HCT116 (cell line): ENCODE measurements at regions of chr15 and their contacts with region 1.

Region 1: DNA sequence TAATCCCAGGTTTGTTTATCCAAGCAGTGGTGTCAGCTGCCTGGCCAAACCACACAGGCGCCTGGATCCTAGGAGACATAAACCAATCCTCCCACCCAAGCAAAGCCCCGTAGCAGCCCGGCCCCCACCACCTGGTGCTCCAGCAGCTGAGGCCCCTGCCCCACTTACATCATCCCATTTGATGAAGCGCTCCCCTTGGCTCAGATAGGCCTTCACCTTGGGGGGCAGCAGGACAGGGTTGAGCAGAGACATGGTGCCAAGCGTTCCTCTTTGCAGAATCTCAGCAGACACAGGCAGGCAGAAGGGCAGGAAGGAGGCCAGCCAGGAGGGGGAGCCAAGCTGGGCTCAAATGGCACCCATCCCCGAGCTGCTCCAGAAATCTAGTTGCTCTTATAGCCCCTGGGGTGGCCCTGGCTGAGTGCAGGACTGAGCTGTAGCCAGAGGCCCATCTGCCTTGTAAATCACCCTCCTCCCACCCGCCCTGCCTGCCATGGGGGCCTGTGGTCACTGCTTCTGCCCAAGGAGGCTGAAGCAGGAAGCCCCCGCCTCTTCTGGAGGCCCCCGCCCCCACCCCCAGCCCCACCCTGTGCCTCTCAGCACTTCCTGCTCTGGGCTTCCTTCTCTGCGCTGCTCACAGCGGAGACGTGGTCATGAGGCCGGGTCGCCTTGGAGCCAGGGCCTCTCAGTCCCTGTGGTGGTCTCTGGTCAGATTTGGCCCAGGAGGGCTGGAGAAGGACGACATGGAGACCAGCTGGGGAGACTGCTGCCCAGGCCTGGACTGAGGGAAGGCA is at the start of gene PLCB2:
- DNase-seq: no peak
- ATAC-seq: peak; percentile 52
- H3K4me3 ChIP-seq: no peak within 1 kb of the TSS
- H3K27ac ChIP-seq: no peak within 1 kb of the TSS
- H3K4me1 ChIP-seq: peaks cover 2 to 14% of the 10 kb centered on the region in 2 experiments; a peak in 1 of 4 replicates
- H3K27me3 ChIP-seq: 0 out of 2 replicates have a peak, but pooled peaks cover 6% of the 10 kb centered on the region
- CTCF ChIP-seq: peak in 2 of 3 experiments; percentile 30 to 44; a peak in 3 of 6 replicates
- POLR2A ChIP-seq: no peak
- RAD21 ChIP-seq: no peak
- total RNA-seq, gene PLCB2: 2.8 TPM

Region 2: GRCh38 chr15:40002295-40002694 is 305.3 kb before region 1 on chr15:
- CTCF ChIA-PET with region 1: no interaction called
- POLR2A ChIA-PET with region 1: no interaction called
- RAD21 ChIA-PET with region 1: no interaction called
- intact Hi-C with region 1: no loop called
- DNase-seq: no peak
- ATAC-seq: no peak
- H3K4me3 ChIP-seq: no peak overlapping the region
- H3K27ac ChIP-seq: no peak overlapping the region
- H3K4me1 ChIP-seq: peaks cover 3% of the 10 kb centered on the region in 2 experiments; a peak in 2 of 4 replicates
- H3K27me3 ChIP-seq: no peaks in the 10 kb centered on the region
- CTCF ChIP-seq: no peak
- POLR2A ChIP-seq: no peak
- RAD21 ChIP-seq: no peak

Region 3: GRCh38 chr15:40290918-40291574 is 16.6 kb before region 1 on chr15:
- CTCF ChIA-PET with region 1: interaction called, 31 read pairs
- POLR2A ChIA-PET with region 1: interaction called, 6 read pairs
- RAD21 ChIA-PET with region 1: interaction called, 3 to 5 read pairs
- intact Hi-C with region 1: no loop called
- DNase-seq: no peak
- ATAC-seq: peak; percentile 82
- H3K4me3 ChIP-seq: peak overlapping the region; percentile 30 to 49
- H3K27ac ChIP-seq: peak overlapping the region; percentile 45; the same call in 1 of the 2 replicates
- H3K4me1 ChIP-seq: peaks cover 46 to 51% of the 10 kb centered on the region in 2 experiments
- H3K27me3 ChIP-seq: no peaks in the 10 kb centered on the region
- CTCF ChIP-seq: no peak
- POLR2A ChIP-seq: peak; percentile 39
- RAD21 ChIP-seq: no peak